Tibial artery (tissue), 4 donors: ENCODE measurements at regions of chr20 and their contacts with region 1.

Region 1: GRCh38 chr20:31723319-31724078 is 831 bp upstream of the BCL2L1 start:
- DNase-seq: peak; percentile 96 to 98
- H3K4me3 ChIP-seq: peak overlapping the region; percentile 76
- H3K27ac ChIP-seq: peak overlapping the region; percentile 97 to 99
- H3K4me1 ChIP-seq: peaks cover 0 to 23% (median 19%) of the 10 kb centered on the region in 4 donors
- H3K27me3 ChIP-seq: no peaks in the 10 kb centered on the region
- CTCF ChIP-seq: peak; percentile 93 to 98

Region 2: DNA sequence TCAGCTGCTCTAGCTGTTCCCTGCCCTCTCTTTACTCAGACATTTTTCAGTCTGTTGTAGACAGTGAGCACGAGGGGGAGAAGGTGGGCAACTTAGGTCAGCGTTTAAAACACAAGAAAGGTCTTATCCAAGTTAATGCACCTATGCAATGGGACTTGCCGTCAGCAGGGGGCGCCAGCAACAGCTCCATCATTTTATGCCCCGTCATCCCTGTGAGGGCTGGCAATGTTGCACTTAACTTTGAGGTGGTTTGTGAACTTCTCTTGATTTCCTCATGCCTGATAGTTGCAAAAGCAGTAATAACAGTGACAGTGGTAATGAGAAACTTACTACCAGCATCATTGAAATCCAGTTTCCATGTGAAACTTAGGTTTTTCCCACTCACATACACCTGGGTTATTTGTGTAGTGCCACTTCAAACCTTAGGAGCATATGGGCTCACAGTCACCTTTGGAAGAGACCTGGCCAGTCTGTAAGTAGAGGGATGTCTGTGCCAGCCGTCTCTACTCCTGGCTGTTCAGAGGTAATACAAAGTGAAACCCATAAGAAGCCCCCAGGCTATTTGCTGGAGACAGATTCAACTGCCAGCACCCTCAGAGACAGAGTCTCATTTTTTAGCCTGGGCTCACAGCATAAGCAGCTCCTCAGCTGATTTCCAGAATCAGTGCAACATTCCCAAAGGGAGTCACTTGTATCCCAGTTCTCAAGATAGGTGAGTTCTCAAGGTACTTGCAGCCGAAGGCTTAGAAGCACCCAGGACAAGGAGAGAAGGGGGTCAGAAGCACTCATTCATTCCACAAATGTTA is 163.2 kb before region 1 on chr20:
- intact Hi-C with region 1: loop called (anchors 10 kb)
- DNase-seq: peak; percentile 67 to 88
- H3K4me3 ChIP-seq: no peak overlapping the region
- H3K27ac ChIP-seq: peak overlapping the region; percentile 72 to 75
- H3K4me1 ChIP-seq: peaks cover 0 to 29% (median 23%) of the 10 kb centered on the region in 4 donors
- H3K27me3 ChIP-seq: no peaks in the 10 kb centered on the region
- CTCF ChIP-seq: peak; percentile 86 to 87

Region 3: GRCh38 chr20:31605031-31605901 is 118.2 kb before region 1 on chr20 and contains the start of gene ID1:
- intact Hi-C with region 1: no loop called
- DNase-seq: peak; percentile 96 to 98
- H3K4me3 ChIP-seq: peak within 1 kb of the TSS; percentile 68 to 83
- H3K27ac ChIP-seq: peak within 1 kb of the TSS; percentile 90 to 94
- H3K4me1 ChIP-seq: peaks cover 0 to 46% (median 30%) of the 10 kb centered on the region in 4 donors
- H3K27me3 ChIP-seq: no peaks in the 10 kb centered on the region
- CTCF ChIP-seq: no peak

Region 4: GRCh38 chr20:31661625-31662371 is 61.7 kb before region 1 on chr20:
- intact Hi-C with region 1: loop called (anchors 2 kb)
- DNase-seq: peak; percentile 75 to 88
- H3K4me3 ChIP-seq: peak overlapping the region; percentile 30 to 43
- H3K27ac ChIP-seq: peak overlapping the region; percentile 50 to 67
- H3K4me1 ChIP-seq: peaks cover 0 to 51% (median 35%) of the 10 kb centered on the region in 4 donors
- H3K27me3 ChIP-seq: no peaks in the 10 kb centered on the region
- CTCF ChIP-seq: peak; percentile 64 to 81